ENCODE measurements at regions of chr6 and their contacts with region 1.

Region 1: GRCh38 chr6:106097411-106098231 is 11.5 kb downstream of the PRDM1 start:
- DNase-seq: peak; percentile 67
- ATAC-seq: peak; percentile 30
- H3K4me3 Mint-ChIP-seq: peak overlapping the region; percentile 82
- H3K27ac Mint-ChIP-seq: peak overlapping the region; percentile 98
- H3K4me1 Mint-ChIP-seq: peaks cover 88% of the 10 kb centered on the region
- H3K27me3 Mint-ChIP-seq: peaks cover 7% of the 10 kb centered on the region

Region 2: DNA sequence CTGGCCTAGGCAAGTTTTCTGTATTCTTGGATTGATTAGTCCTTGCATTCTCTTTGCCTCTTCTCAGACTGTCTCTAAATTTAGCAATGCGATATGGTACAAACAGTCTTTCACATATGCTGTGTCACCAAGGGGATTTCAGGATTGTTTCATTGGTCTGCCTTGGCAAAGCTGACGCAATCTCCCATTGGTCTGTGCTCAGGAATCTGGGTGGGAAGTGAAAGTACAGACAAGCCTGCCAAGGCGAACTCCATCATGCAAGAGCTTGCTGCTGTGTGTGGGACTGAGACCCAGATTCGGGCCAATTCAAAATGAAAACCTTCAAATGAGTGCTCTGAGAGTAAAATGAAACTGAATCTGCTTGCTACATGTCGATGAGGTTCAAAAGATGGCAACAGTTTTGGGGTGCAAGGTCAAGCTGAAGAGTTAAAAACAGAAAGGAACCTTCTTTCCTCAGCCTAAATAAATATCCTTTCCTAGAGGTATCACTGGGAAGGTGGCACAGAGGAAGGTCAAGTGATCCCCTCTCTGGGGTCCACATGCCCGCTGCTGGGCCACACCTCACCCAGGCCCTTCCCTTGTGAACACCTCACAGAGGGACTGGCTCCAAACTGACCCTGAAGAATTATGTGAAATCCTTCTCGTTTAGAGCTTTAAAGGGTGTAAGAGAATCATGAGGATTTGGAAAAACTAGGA is 495.9 kb before region 1 on chr6:
- CTCF ChIA-PET with region 1: no interaction called
- POLR2A ChIA-PET with region 1: no interaction called
- intact Hi-C with region 1: loop called in 1 of 2 experiments (anchors 2 kb)
- DNase-seq: peak; percentile 73
- ATAC-seq: peak; percentile 90
- H3K4me3 Mint-ChIP-seq: no peak overlapping the region
- H3K27ac Mint-ChIP-seq: peak overlapping the region; percentile 79
- H3K4me1 Mint-ChIP-seq: peaks cover 15% of the 10 kb centered on the region
- H3K27me3 Mint-ChIP-seq: peaks cover 8% of the 10 kb centered on the region

Region 3: GRCh38 chr6:105692626-105693215 is 404.9 kb before region 1 on chr6:
- CTCF ChIA-PET with region 1: no interaction called
- POLR2A ChIA-PET with region 1: no interaction called
- intact Hi-C with region 1: no loop called
- DNase-seq: no peak
- ATAC-seq: no peak
- H3K4me3 Mint-ChIP-seq: no peak overlapping the region
- H3K27ac Mint-ChIP-seq: no peak overlapping the region
- H3K4me1 Mint-ChIP-seq: no peaks in the 10 kb centered on the region
- H3K27me3 Mint-ChIP-seq: peaks cover 12% of the 10 kb centered on the region

Region 4: DNA sequence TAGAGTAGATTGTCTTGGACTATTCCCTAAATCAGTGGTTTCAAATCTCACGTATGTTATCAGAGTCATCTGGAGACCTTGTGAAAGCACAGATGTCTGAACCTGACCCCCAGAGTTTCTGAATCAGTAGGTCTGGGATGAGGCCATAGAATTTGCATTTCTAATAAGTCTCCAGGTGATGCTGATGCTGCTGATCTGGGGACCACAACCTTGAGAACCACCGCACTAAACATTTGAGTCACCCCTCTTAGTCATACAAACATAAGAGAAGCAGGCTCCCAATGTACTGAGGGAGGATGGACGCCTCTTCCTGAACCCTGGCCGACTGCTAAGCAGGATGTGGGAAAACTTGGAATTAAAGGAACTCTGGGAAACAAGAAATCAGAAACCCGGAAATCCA is 199.3 kb before region 1 on chr6:
- CTCF ChIA-PET with region 1: no interaction called
- POLR2A ChIA-PET with region 1: interaction called, 4 read pairs
- intact Hi-C with region 1: loop called (anchors 1 to 5 kb)
- DNase-seq: peak; percentile 43
- ATAC-seq: peak; percentile 62
- H3K4me3 Mint-ChIP-seq: no peak overlapping the region
- H3K27ac Mint-ChIP-seq: no peak overlapping the region
- H3K4me1 Mint-ChIP-seq: peaks cover 24% of the 10 kb centered on the region
- H3K27me3 Mint-ChIP-seq: peaks cover 4% of the 10 kb centered on the region

Region 5: GRCh38 chr6:106085984-106086813 is 11.4 kb before region 1 on chr6 and contains the start of gene PRDM1:
- CTCF ChIA-PET with region 1: interaction called, 12 read pairs
- POLR2A ChIA-PET with region 1: interaction called, 17 read pairs
- intact Hi-C with region 1: loop called (anchors 1 kb)
- DNase-seq: peak; percentile 83
- ATAC-seq: peak; percentile 66
- H3K4me3 Mint-ChIP-seq: peak within 1 kb of the TSS; percentile 76
- H3K27ac Mint-ChIP-seq: peak within 1 kb of the TSS; percentile 84
- H3K4me1 Mint-ChIP-seq: peaks cover 71% of the 10 kb centered on the region
- H3K27me3 Mint-ChIP-seq: peaks cover 49% of the 10 kb centered on the region
- total RNA-seq, gene PRDM1: 20.1 to 35.6 TPM

Region 6: DNA sequence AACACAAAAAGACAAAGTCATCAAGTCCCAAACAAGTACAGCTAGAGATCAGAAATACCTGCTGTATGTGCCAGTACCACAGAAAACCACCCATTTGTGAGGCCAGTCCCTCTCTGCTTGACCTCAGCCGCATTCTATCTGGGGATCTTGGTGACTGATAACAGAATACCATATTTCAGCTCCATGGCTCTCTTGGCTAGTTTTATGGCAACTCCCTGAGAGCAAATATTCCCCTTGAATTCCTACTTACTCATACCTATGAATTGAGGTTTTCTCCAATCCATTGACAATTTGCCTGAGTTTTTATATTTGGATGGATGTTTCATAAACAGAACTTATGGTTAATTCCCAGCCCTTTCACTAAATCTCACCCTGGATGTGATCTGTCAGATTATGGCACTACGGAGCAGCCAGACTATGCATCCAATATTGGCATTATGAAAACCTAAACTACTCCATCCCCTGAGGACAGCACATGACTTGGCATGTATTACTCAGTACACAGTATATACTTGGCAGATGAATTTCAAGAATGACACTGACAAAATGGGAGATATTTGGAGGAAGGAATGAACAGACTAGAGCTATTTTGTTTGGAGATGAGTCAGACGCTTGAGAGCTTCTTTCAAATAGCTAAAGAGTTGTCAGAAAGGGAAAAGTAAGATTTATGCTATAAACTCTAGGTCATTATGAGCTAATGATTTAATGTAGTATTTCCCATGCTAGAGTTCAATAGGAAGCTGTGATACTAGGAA is 84.2 kb after region 1 on chr6:
- CTCF ChIA-PET with region 1: interaction called, 4 read pairs
- POLR2A ChIA-PET with region 1: no interaction called
- intact Hi-C with region 1: loop called (anchors 1 kb)
- DNase-seq: no peak
- ATAC-seq: peak; percentile 64
- H3K4me3 Mint-ChIP-seq: no peak overlapping the region
- H3K27ac Mint-ChIP-seq: peak overlapping the region; percentile 44
- H3K4me1 Mint-ChIP-seq: peaks cover 48% of the 10 kb centered on the region
- H3K27me3 Mint-ChIP-seq: peaks cover 4% of the 10 kb centered on the region

Region 7: DNA sequence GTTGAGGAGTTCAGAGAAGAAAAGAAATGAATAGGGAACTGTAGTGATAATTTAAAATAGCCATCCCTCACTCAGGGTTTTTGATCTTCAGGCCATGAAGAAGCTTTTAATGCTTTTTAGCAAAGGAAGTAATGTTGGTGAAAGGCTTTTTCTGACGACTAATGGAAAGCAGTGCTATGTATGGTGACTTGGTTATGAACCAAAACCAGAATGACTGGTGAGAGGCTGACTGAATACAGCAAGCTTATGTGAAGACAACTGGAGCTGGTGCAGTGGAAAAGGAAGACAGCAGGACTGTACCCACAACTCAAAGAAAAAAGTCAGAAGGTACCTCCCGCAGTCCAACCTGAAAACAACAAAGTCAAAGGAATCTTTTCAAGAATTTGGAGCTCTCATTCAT is 107.3 kb after region 1 on chr6:
- CTCF ChIA-PET with region 1: no interaction called
- POLR2A ChIA-PET with region 1: no interaction called
- intact Hi-C with region 1: no loop called
- DNase-seq: no peak
- ATAC-seq: peak; percentile 47
- H3K4me3 Mint-ChIP-seq: no peak overlapping the region
- H3K27ac Mint-ChIP-seq: no peak overlapping the region
- H3K4me1 Mint-ChIP-seq: peaks cover 12% of the 10 kb centered on the region
- H3K27me3 Mint-ChIP-seq: no peaks in the 10 kb centered on the region

Region 8: GRCh38 chr6:106325336-106326178 is 227.9 kb after region 1 on chr6 and contains the start of gene ATG5:
- CTCF ChIA-PET with region 1: no interaction called
- POLR2A ChIA-PET with region 1: no interaction called
- intact Hi-C with region 1: loop called in 1 of 2 experiments (anchors 5 kb)
- DNase-seq: peak; percentile 100
- ATAC-seq: peak; percentile 96
- H3K4me3 Mint-ChIP-seq: peak within 1 kb of the TSS; percentile 99
- H3K27ac Mint-ChIP-seq: peak within 1 kb of the TSS; percentile 98
- H3K4me1 Mint-ChIP-seq: peaks cover 39% of the 10 kb centered on the region
- H3K27me3 Mint-ChIP-seq: peaks cover 8% of the 10 kb centered on the region
- total RNA-seq, gene ATG5: 27.2 to 31.6 TPM